ENCODE measurements at regions of chr17 and their contacts with region 1.

Region 1: GRCh38 chr17:5191541-5192417 is at the start of gene ZNF594:
- DNase-seq: peak; percentile 96
- ATAC-seq: peak; percentile 99
- H3K4me3 Mint-ChIP-seq: peak within 1 kb of the TSS; percentile 94
- H3K27ac Mint-ChIP-seq: peak within 1 kb of the TSS; percentile 90
- H3K4me1 Mint-ChIP-seq: peaks cover 32% of the 10 kb centered on the region
- H3K27me3 Mint-ChIP-seq: no peaks in the 10 kb centered on the region
- CTCF ChIP-seq: no peak
- total RNA-seq, gene ZNF594: 20.4 and 26.8 TPM in 2 replicates

Region 2: GRCh38 chr17:5078106-5079028 is 113.4 kb before region 1 on chr17 and contains the start of gene ZFP3:
- CTCF ChIA-PET with region 1: no interaction called
- POLR2A ChIA-PET with region 1: interaction called, 29 read pairs
- intact Hi-C with region 1: loop called (anchors 1 kb)
- DNase-seq: peak; percentile 80
- ATAC-seq: peak; percentile 88
- H3K4me3 Mint-ChIP-seq: peak within 1 kb of the TSS; percentile 83
- H3K27ac Mint-ChIP-seq: peak within 1 kb of the TSS; percentile 96
- H3K4me1 Mint-ChIP-seq: peaks cover 31% of the 10 kb centered on the region
- H3K27me3 Mint-ChIP-seq: no peaks in the 10 kb centered on the region
- CTCF ChIP-seq: no peak
- total RNA-seq, gene ZFP3: 10.1 and 11.5 TPM in 2 replicates

Region 3: GRCh38 chr17:5111402-5112204 is 80.2 kb before region 1 on chr17 and contains the start of gene ZNF232:
- CTCF ChIA-PET with region 1: interaction called, 4 read pairs
- POLR2A ChIA-PET with region 1: interaction called, 13 read pairs
- intact Hi-C with region 1: loop called (anchors 2 kb)
- DNase-seq: peak; percentile 91
- ATAC-seq: peak; percentile 90
- H3K4me3 Mint-ChIP-seq: peak within 1 kb of the TSS; percentile 85
- H3K27ac Mint-ChIP-seq: peak within 1 kb of the TSS; percentile 79
- H3K4me1 Mint-ChIP-seq: peaks cover 27% of the 10 kb centered on the region
- H3K27me3 Mint-ChIP-seq: peaks cover 11% of the 10 kb centered on the region
- CTCF ChIP-seq: no peak
- total RNA-seq, gene ZNF232: 12.6 and 14.8 TPM in 2 replicates

Region 4: GRCh38 chr17:5226940-5227878 is 35.4 kb after region 1 on chr17:
- CTCF ChIA-PET with region 1: interaction called, 35 read pairs
- POLR2A ChIA-PET with region 1: interaction called, 46 read pairs
- intact Hi-C with region 1: no loop called
- DNase-seq: no peak
- ATAC-seq: peak; percentile 56
- H3K4me3 Mint-ChIP-seq: peak overlapping the region; percentile 75
- H3K27ac Mint-ChIP-seq: peak overlapping the region; percentile 98
- H3K4me1 Mint-ChIP-seq: peaks cover 100% of the 10 kb centered on the region
- H3K27me3 Mint-ChIP-seq: no peaks in the 10 kb centered on the region
- CTCF ChIP-seq: no peak

Region 5: DNA sequence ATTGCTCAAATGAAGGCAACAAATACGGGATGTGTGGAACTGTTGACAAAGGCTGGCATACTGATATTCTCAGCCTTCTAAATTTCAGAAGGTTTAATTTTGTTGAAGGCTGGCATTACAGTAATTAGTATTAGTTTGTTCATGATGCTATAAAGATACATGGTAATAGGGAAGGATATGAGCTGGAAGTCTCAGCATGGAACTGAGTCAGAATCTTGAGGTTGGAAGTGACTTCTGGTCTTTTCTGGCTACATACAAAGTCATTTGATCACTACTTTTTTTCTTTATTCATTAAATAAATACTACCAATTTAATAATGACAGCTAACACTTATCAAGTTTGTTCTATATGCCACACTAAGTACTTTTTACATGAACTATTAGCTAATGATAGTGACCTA is 112.9 kb after region 1 on chr17:
- CTCF ChIA-PET with region 1: interaction called, 10 read pairs
- POLR2A ChIA-PET with region 1: interaction called, 9 read pairs
- intact Hi-C with region 1: no loop called
- DNase-seq: no peak
- ATAC-seq: no peak
- H3K4me3 Mint-ChIP-seq: no peak overlapping the region
- H3K27ac Mint-ChIP-seq: no peak overlapping the region
- H3K4me1 Mint-ChIP-seq: peaks cover 68% of the 10 kb centered on the region
- H3K27me3 Mint-ChIP-seq: no peaks in the 10 kb centered on the region
- CTCF ChIP-seq: no peak

Region 6: GRCh38 chr17:5419356-5419958 is 227.7 kb after region 1 on chr17 and contains the start of gene NUP88:
- CTCF ChIA-PET with region 1: no interaction called
- POLR2A ChIA-PET with region 1: interaction called, 8 read pairs
- intact Hi-C with region 1: loop called (anchors 2 kb)
- DNase-seq: peak; percentile 87
- ATAC-seq: peak; percentile 86
- H3K4me3 Mint-ChIP-seq: peak within 1 kb of the TSS; percentile 100
- H3K27ac Mint-ChIP-seq: peak within 1 kb of the TSS; percentile 100
- H3K4me1 Mint-ChIP-seq: peaks cover 49% of the 10 kb centered on the region
- H3K27me3 Mint-ChIP-seq: no peaks in the 10 kb centered on the region
- CTCF ChIP-seq: no peak
- total RNA-seq, gene NUP88: 158 and 187 TPM in 2 replicates